ENCODE measurements at regions of chr10 and their contacts with region 1.

Region 1: DNA sequence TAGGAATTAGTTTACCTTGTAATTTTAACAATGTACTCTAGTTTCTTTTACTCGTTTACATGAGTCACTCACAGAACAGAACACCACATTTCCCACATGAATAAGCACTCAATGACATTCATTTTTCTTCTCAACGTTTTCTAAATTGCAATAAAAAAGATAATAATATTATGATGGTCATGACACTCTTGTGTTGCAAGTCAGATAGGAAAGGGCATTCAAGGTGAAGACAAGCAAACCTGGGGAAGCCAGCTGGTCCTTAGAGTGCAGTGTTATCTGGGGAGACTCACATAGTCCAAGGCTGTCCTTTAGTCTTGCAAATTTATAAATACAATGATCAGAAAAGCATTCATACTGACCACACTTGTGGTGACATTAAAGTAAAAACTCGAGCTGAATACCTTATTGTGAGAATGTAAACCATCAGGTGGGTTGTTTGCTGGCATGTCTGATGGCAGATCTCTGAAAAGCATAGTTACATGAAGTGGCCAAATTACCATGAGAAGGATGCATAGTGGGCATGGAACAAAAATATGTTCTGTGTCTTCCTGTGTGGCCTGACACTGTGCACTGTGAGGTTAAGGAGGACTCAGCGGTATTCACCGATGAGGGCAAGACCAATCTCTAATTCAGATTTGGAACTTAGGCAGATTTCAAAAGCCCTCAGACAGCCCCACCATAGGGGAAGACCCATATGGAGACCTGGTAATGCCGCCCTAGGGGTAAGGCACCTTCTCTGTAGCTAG is 158.9 kb upstream of the ASAH2 start:
- DNase-seq: no peak
- ATAC-seq: peak; percentile 47
- H3K4me3 ChIP-seq: no peak overlapping the region
- H3K27ac ChIP-seq: no peak overlapping the region
- H3K4me1 ChIP-seq: no peaks in the 10 kb centered on the region
- H3K27me3 ChIP-seq: no peaks in the 10 kb centered on the region
- CTCF ChIP-seq: no peak
- EP300 ChIP-seq: no peak
- POLR2A ChIP-seq: no peak
- RAD21 ChIP-seq: no peak

Region 2: DNA sequence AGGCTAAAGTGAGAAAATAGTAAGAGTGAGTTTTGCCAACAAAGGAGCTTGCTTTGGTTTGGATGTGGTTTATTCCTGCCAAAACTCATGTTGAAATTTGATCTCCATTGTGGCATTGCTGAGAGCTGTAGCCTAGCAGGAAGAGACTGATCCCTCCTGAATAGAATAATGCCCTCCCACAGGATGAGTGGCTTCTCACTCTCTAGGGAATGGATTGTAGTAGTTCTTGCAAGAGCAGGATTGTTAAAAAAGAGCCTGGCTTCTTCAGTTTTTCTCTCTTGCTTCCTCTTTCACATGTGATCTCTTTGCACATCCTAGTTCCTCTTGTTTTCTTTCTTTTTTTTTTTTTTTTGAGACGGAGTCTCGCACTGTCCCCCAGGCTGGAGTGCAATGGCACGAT is 193.3 kb before region 1 on chr10:
- CTCF ChIA-PET with region 1: no interaction called
- POLR2A ChIA-PET with region 1: no interaction called
- RAD21 ChIA-PET with region 1: no interaction called
- SMC1A ChIA-PET with region 1: no interaction called
- in situ Hi-C with region 1: no loop called
- intact Hi-C with region 1: no loop called
- DNase-seq: no peak
- ATAC-seq: peak; percentile 44
- H3K4me3 ChIP-seq: no peak overlapping the region
- H3K27ac ChIP-seq: no peak overlapping the region
- H3K4me1 ChIP-seq: no peaks in the 10 kb centered on the region
- H3K27me3 ChIP-seq: no peaks in the 10 kb centered on the region
- CTCF ChIP-seq: no peak
- EP300 ChIP-seq: no peak
- POLR2A ChIP-seq: no peak
- RAD21 ChIP-seq: no peak

Region 3: GRCh38 chr10:50336140-50336539 is 74.1 kb before region 1 on chr10:
- CTCF ChIA-PET with region 1: no interaction called
- POLR2A ChIA-PET with region 1: no interaction called
- RAD21 ChIA-PET with region 1: interaction called, 3 read pairs
- SMC1A ChIA-PET with region 1: interaction called, 14 read pairs
- in situ Hi-C with region 1: no loop called
- intact Hi-C with region 1: no loop called
- DNase-seq: no peak
- ATAC-seq: peak; percentile 67
- H3K4me3 ChIP-seq: no peak overlapping the region
- H3K27ac ChIP-seq: peak overlapping the region; percentile 4; the same call in 1 of the 2 replicates
- H3K4me1 ChIP-seq: no peaks in the 10 kb centered on the region
- H3K27me3 ChIP-seq: no peaks in the 10 kb centered on the region
- CTCF ChIP-seq: no peak
- EP300 ChIP-seq: no peak
- POLR2A ChIP-seq: no peak
- RAD21 ChIP-seq: no peak

Region 4: GRCh38 chr10:50367732-50368131 is 42.5 kb before region 1 on chr10:
- CTCF ChIA-PET with region 1: interaction called, 5 read pairs
- POLR2A ChIA-PET with region 1: no interaction called
- RAD21 ChIA-PET with region 1: interaction called, 11 read pairs
- SMC1A ChIA-PET with region 1: interaction called, 21 read pairs
- in situ Hi-C with region 1: no loop called
- intact Hi-C with region 1: loop called (anchors 5 kb)
- DNase-seq: no peak
- ATAC-seq: peak; percentile 62
- H3K4me3 ChIP-seq: no peak overlapping the region
- H3K27ac ChIP-seq: no peak overlapping the region
- H3K4me1 ChIP-seq: peaks cover 17% of the 10 kb centered on the region
- H3K27me3 ChIP-seq: no peaks in the 10 kb centered on the region
- CTCF ChIP-seq: peak; percentile 29 to 43 (median 30); a peak in 4 of 6 replicates
- EP300 ChIP-seq: no peak
- POLR2A ChIP-seq: no peak
- RAD21 ChIP-seq: peak; percentile 49

Region 5: DNA sequence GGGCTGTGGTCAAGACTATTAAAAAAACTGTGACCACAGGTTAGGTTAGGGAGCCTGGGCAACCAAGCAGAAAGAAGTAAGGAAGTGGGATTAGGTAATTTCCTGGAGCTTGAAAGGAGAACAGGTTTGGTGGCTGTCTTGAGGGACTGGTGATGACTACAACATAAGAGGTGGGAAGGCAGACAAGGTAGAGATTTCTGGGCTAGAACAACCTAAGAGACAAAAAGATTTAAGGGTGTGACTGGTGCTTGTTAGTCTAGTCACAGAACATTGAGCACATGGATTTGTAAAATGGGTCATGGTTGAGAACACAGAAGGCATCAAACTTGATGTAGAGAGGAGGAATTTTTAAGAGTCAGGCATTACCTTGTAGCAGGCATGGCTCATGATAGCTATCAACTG is 35.2 kb before region 1 on chr10:
- CTCF ChIA-PET with region 1: interaction called, 5 read pairs
- POLR2A ChIA-PET with region 1: no interaction called
- RAD21 ChIA-PET with region 1: no interaction called
- SMC1A ChIA-PET with region 1: interaction called, 10 read pairs
- in situ Hi-C with region 1: no loop called
- intact Hi-C with region 1: no loop called
- DNase-seq: no peak
- ATAC-seq: peak; percentile 51
- H3K4me3 ChIP-seq: no peak overlapping the region
- H3K27ac ChIP-seq: no peak overlapping the region
- H3K4me1 ChIP-seq: peaks cover 14% of the 10 kb centered on the region
- H3K27me3 ChIP-seq: no peaks in the 10 kb centered on the region
- CTCF ChIP-seq: no peak
- EP300 ChIP-seq: no peak
- POLR2A ChIP-seq: no peak
- RAD21 ChIP-seq: no peak

Region 6: GRCh38 chr10:50396491-50397311 is 13.5 kb before region 1 on chr10:
- CTCF ChIA-PET with region 1: interaction called, 13 read pairs
- POLR2A ChIA-PET with region 1: interaction called, 4 read pairs
- RAD21 ChIA-PET with region 1: interaction called, 6 read pairs
- SMC1A ChIA-PET with region 1: interaction called, 46 read pairs
- in situ Hi-C with region 1: no loop called
- intact Hi-C with region 1: no loop called
- DNase-seq: no peak
- ATAC-seq: peak; percentile 92
- H3K4me3 ChIP-seq: peak overlapping the region; percentile 4; the same call in 1 of the 2 replicates
- H3K27ac ChIP-seq: peak overlapping the region; percentile 65
- H3K4me1 ChIP-seq: peaks cover 17% of the 10 kb centered on the region
- H3K27me3 ChIP-seq: no peaks in the 10 kb centered on the region
- CTCF ChIP-seq: no peak
- EP300 ChIP-seq: 0 out of 4 replicates have a peak, but pooled peaks of 1 of the 2 experiments have one; percentile 16
- POLR2A ChIP-seq: no peak
- RAD21 ChIP-seq: no peak

Region 7: DNA sequence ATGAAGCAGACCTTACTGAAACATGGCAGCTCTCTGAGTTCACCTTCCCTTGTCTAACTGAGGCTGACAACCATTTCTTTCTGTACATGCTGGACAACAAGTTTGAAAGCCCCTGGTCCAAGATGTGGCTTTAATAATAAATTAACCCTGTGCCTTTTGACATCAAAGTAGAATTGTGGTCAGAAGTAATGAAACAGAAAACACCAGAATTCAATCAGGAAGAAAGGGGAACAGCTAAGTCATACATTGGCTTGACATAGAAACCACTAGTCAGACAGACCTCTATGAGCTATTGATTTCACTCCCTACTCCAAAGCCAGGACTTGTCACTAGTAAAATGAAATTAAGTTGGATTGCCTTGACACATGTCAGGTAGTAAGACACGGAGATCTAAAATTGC is 16.2 kb after region 1 on chr10:
- CTCF ChIA-PET with region 1: interaction called, 5 read pairs
- POLR2A ChIA-PET with region 1: interaction called, 5 read pairs
- RAD21 ChIA-PET with region 1: interaction called, 6 read pairs
- SMC1A ChIA-PET with region 1: interaction called, 49 read pairs
- in situ Hi-C with region 1: no loop called
- intact Hi-C with region 1: no loop called
- DNase-seq: peak; percentile 56
- ATAC-seq: peak; percentile 81
- H3K4me3 ChIP-seq: no peak overlapping the region
- H3K27ac ChIP-seq: no peak overlapping the region
- H3K4me1 ChIP-seq: peaks cover 23% of the 10 kb centered on the region
- H3K27me3 ChIP-seq: no peaks in the 10 kb centered on the region
- CTCF ChIP-seq: no peak
- EP300 ChIP-seq: no peak
- POLR2A ChIP-seq: no peak
- RAD21 ChIP-seq: no peak

Region 8: GRCh38 chr10:50452603-50453002 is 42.4 kb after region 1 on chr10:
- CTCF ChIA-PET with region 1: no interaction called
- POLR2A ChIA-PET with region 1: no interaction called
- RAD21 ChIA-PET with region 1: interaction called, 5 read pairs
- SMC1A ChIA-PET with region 1: interaction called, 10 read pairs
- in situ Hi-C with region 1: no loop called
- intact Hi-C with region 1: no loop called
- DNase-seq: no peak
- ATAC-seq: peak; percentile 57
- H3K4me3 ChIP-seq: peak overlapping the region; percentile 7; the same call in 1 of the 2 replicates
- H3K27ac ChIP-seq: peak overlapping the region; percentile 77
- H3K4me1 ChIP-seq: peaks cover 42% of the 10 kb centered on the region
- H3K27me3 ChIP-seq: no peaks in the 10 kb centered on the region
- CTCF ChIP-seq: no peak
- EP300 ChIP-seq: peak; percentile 65 to 67; a peak in 2 of 4 replicates
- POLR2A ChIP-seq: no peak
- RAD21 ChIP-seq: no peak

Region 9: DNA sequence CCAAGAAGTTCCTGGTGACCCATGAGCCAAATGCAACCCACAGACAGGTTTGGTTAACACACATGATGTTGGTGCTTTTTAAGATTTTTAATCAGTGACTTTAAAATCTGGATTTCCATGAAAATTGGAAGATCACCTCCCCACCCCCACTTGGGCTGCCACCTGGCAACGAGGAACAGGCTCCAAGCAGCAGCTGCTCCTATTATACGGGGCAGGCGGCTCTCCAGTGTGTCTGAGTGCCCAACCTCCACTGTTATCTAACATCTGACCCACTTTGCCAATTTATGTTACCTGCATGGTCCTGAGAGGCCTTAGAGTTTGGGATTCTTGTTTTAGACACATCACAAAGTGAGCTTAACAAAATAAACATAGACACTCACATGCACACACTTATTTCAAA is 157.1 kb after region 1 on chr10:
- CTCF ChIA-PET with region 1: no interaction called
- POLR2A ChIA-PET with region 1: no interaction called
- RAD21 ChIA-PET with region 1: no interaction called
- SMC1A ChIA-PET with region 1: no interaction called
- in situ Hi-C with region 1: no loop called
- intact Hi-C with region 1: no loop called
- DNase-seq: no peak
- ATAC-seq: no peak
- H3K4me3 ChIP-seq: no peak overlapping the region
- H3K27ac ChIP-seq: no peak overlapping the region
- H3K4me1 ChIP-seq: no peaks in the 10 kb centered on the region
- H3K27me3 ChIP-seq: no peaks in the 10 kb centered on the region
- CTCF ChIP-seq: no peak
- EP300 ChIP-seq: no peak
- POLR2A ChIP-seq: no peak
- RAD21 ChIP-seq: no peak